Activated B cell treated with CpG ODN at 0.5 μM for 24 hours (primary cell): ENCODE measurements at regions of chr19 and their contacts with region 1.

Region 1: DNA sequence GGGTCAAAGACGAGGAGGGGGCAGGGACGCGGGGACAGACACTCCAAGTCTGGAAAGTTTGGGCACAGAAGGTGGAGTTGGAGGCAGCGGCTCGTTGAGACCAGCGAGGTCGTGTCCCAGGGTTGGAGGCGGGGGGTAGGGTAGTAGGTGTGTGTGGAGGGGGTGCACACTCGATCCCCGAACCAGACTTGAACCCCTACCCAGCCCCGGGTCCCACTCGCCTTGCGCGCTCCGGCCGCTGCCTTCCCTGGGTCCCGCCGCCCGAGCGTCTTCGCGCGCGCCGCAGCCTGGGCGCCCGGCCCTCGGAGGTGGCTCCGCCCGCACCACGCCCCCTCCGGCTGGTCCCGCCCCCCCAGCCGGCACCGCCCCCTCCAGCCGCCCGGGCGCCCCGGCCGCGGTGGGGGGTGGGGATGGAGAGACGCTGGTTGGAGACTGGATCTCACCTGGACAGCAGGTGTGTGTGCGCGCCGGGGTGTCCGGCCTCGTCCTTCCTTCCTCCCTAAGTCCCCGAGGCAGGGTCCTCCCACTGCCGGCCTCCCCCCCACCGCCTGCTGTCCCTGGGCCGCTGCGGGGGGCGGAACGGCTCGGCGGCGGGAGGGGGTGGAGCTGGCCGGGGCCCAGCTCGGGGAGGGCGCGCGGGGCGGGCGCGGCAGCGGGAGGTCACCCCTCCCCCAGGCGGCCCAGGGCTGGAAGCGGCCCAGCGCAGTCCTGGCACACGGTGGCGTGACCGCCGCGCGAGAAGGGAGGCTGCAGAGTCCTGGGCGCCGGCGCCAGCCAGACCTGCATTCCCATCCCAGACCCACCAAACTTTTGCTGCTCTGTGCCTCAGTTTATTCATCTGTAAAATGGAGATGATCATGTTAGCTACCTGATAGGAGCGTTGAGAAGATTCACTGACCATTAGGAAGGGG is at the start of gene KANK2:
- DNase-seq: peak; percentile 83
- ATAC-seq: peak; percentile 93
- H3K4me3 Mint-ChIP-seq: peak within 1 kb of the TSS; percentile 74
- H3K27ac Mint-ChIP-seq: no peak within 1 kb of the TSS
- H3K4me1 Mint-ChIP-seq: peaks cover 11% of the 10 kb centered on the region
- H3K27me3 Mint-ChIP-seq: peaks cover 15% of the 10 kb centered on the region
- CTCF ChIP-seq: no peak
- total RNA-seq, gene KANK2: 2.3 and 3.3 TPM in 2 replicates

Region 2: GRCh38 chr19:11155373-11156120 is 42.0 kb before region 1 on chr19 and contains the start of gene SPC24:
- CTCF ChIA-PET with region 1: no interaction called
- POLR2A ChIA-PET with region 1: no interaction called
- intact Hi-C with region 1: loop called (anchors 5 kb)
- DNase-seq: peak; percentile 78
- ATAC-seq: peak; percentile 99
- H3K4me3 Mint-ChIP-seq: peak within 1 kb of the TSS; percentile 82
- H3K27ac Mint-ChIP-seq: peak within 1 kb of the TSS; percentile 73
- H3K4me1 Mint-ChIP-seq: peaks cover 11% of the 10 kb centered on the region
- H3K27me3 Mint-ChIP-seq: no peaks in the 10 kb centered on the region
- CTCF ChIP-seq: no peak
- total RNA-seq, gene SPC24: 0.98 and 1.3 TPM in 2 replicates

Region 3: DNA sequence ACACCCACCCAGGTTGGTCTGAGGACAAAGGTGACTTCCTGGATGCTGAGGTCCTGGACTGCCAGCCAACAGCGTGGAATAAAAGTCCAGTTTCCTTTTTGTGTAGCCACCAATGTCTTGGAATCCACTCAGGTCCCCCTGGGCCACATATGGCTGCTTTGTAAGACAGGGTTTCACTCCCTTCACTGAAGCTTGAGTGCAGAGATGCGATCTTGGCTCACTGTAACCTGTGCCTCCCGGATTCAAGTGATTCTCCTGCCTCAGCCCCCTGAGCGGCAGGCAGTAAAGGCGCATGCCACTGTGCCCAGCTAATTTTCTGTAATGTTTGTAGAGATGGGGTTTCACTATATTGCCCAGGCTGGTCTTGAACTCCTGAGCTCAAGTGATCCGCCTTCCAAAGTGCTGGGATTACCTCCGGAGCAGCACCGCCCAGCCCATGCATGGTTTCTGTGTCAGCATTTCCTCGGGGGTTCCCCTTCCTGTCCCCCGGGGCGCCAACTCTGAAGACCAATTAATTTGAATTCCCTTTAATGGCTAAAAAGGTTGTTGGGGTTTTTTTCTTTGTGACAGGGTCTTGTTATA is 17.7 kb before region 1 on chr19:
- CTCF ChIA-PET with region 1: no interaction called
- POLR2A ChIA-PET with region 1: no interaction called
- intact Hi-C with region 1: loop called (anchors 1 kb)
- DNase-seq: peak; percentile 66
- ATAC-seq: peak; percentile 97
- H3K4me3 Mint-ChIP-seq: peak overlapping the region; percentile 70
- H3K27ac Mint-ChIP-seq: peak overlapping the region; percentile 21
- H3K4me1 Mint-ChIP-seq: peaks cover 20% of the 10 kb centered on the region
- H3K27me3 Mint-ChIP-seq: peaks cover 11% of the 10 kb centered on the region
- CTCF ChIP-seq: no peak